ENCODE measurements at regions of chr1 and their contacts with region 1.

Region 1: GRCh38 chr1:199756066-199756465 is 271.4 kb upstream of the NR5A2 start:
- DNase-seq: no peak
- H3K4me3 ChIP-seq: no peak overlapping the region
- H3K27ac ChIP-seq: no peak overlapping the region
- H3K4me1 ChIP-seq: no peaks in the 10 kb centered on the region
- H3K27me3 ChIP-seq: no peaks in the 10 kb centered on the region
- CTCF ChIP-seq: no peak
- EP300 ChIP-seq: no peak
- POLR2A ChIP-seq: no peak

Region 2: DNA sequence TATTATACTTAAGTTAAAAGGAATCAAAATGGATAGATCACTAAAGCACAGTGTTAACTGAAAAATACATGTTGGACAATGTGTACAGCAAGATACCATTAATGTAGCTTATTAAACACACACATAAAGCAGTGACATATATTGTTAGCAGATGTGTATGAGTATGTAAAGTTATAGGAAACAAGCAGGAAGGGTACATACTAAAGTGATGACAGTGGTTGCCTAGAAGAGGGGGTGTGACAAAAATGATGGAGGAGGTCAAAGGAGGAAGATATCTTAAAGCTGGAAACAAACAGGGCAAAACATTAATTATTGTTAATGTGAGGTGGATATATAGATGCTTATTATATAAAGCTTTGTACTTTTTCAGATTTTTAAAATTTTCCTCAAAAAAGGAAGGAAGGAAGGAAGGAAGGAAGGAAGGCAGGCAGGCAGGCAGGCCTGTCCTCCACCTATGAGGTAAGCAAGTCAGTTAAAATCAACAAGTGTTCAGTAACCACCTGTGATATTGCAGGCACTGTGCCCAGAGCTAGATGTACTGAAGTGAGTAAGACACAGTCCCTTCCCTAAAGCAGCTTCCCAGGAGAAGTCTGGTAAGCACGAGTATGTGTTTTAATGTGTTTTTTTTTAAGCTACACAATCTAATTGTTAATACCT is 18.5 kb after region 1 on chr1:
- in situ Hi-C with region 1: no loop called
- intact Hi-C with region 1: loop called (anchors 1 kb)
- DNase-seq: peak; percentile 40
- H3K4me3 ChIP-seq: no peak overlapping the region
- H3K27ac ChIP-seq: no peak overlapping the region
- H3K4me1 ChIP-seq: peaks cover 0 to 5% (median 0%) of the 10 kb centered on the region in 4 donors
- H3K27me3 ChIP-seq: no peaks in the 10 kb centered on the region
- CTCF ChIP-seq: no peak
- EP300 ChIP-seq: no peak
- POLR2A ChIP-seq: no peak